ENCODE measurements at regions of chr20 and their contacts with region 1.

Region 1: GRCh38 chr20:10090588-10091166 is 55.9 kb downstream of the ANKEF1 start:
- DNase-seq: peak; percentile 57 to 76
- ATAC-seq: peak; percentile 84 to 91
- H3K4me3 ChIP-seq: no peak overlapping the region
- H3K27ac ChIP-seq: peak overlapping the region; percentile 70 to 85
- H3K4me1 ChIP-seq: peaks cover 43% of the 10 kb centered on the region
- CTCF ChIP-seq: peak; percentile 96
- EP300 ChIP-seq: no peak
- POLR2A ChIP-seq: no peak
- RAD21 ChIP-seq: peak; percentile 95 to 96

Region 2: GRCh38 chr20:9966966-9967365 is 123.7 kb before region 1 on chr20:
- CTCF ChIA-PET with region 1: interaction called, 20 read pairs
- POLR2A ChIA-PET with region 1: no interaction called
- DNase-seq: peak; percentile 36 to 38
- ATAC-seq: peak; percentile 87 to 96
- H3K4me3 ChIP-seq: no peak overlapping the region
- H3K27ac ChIP-seq: no peak overlapping the region
- H3K4me1 ChIP-seq: no peaks in the 10 kb centered on the region
- CTCF ChIP-seq: peak; percentile 64
- EP300 ChIP-seq: no peak
- POLR2A ChIP-seq: no peak
- RAD21 ChIP-seq: peak; percentile 57 to 64; a peak in 4 of 5 replicates

Region 3: GRCh38 chr20:10034717-10035571 is 55.7 kb before region 1 on chr20 and contains the start of gene ANKEF1:
- CTCF ChIA-PET with region 1: interaction called, 86 read pairs
- POLR2A ChIA-PET with region 1: interaction called, 3 read pairs
- DNase-seq: peak; percentile 88 to 91
- ATAC-seq: peak; percentile 99 to 100
- H3K4me3 ChIP-seq: peak within 1 kb of the TSS; percentile 61
- H3K27ac ChIP-seq: peak within 1 kb of the TSS; percentile 85 to 93
- H3K4me1 ChIP-seq: peaks cover 23% of the 10 kb centered on the region
- CTCF ChIP-seq: no peak
- EP300 ChIP-seq: no peak
- POLR2A ChIP-seq: peak; percentile 69
- RAD21 ChIP-seq: peak in 1 of 2 experiments; percentile 38; a peak in 2 of 5 replicates
- polyA plus RNA-seq, gene ANKEF1: 19.7 and 21.2 TPM in 2 replicates

Region 4: DNA sequence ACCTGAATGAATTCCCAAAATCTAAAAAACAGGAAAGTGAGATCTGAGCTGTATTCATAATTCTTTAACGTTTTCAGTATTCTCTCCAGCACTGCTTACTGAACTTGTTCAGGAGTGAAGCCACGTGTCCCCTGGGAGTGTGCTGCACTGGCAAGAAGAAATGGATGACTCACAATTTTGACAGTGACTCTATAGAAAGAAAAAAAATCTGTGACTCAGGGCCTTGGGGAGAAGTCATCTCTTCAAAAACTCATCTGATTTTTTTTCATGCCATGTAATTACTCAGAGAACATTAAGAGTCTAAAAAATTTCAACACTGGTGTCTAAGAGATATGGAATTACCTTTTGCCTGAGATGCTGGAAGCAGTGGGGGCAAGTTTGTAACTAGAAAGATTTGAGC is 16.2 kb before region 1 on chr20:
- CTCF ChIA-PET with region 1: interaction called, 115 read pairs
- POLR2A ChIA-PET with region 1: interaction called, 4 read pairs
- DNase-seq: peak; percentile 75 to 81
- ATAC-seq: peak; percentile 87 to 92
- H3K4me3 ChIP-seq: no peak overlapping the region
- H3K27ac ChIP-seq: peak overlapping the region; percentile 67 to 82
- H3K4me1 ChIP-seq: peaks cover 46% of the 10 kb centered on the region
- CTCF ChIP-seq: no peak
- EP300 ChIP-seq: peak in 1 of 2 experiments; percentile 49; a peak in 1 of 5 replicates
- POLR2A ChIP-seq: no peak
- RAD21 ChIP-seq: 0 out of 5 replicates have a peak, but pooled peaks of 1 of the 2 experiments have one; percentile 1

Region 5: DNA sequence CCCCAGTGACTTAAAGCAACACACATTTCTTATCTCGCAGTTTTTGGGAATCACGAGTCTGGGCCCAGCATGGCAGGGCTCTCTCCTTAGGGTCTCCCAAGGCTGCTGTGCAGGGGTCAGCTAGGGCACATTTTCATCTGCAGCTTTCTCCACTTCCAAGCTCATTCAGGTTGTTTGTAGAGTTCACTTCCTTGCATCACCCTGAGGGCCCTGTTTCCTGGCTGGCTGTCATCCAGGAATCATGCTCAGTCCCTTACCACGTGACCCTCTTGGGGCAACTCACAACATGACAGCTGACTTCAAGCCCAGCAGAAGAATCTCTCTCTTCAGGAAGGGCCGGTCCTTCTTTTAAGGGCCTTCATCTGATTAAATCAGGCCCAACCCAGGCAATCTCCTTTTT is 149.3 kb after region 1 on chr20:
- CTCF ChIA-PET with region 1: interaction called, 18 read pairs
- POLR2A ChIA-PET with region 1: no interaction called
- DNase-seq: peak; percentile 38 to 84
- ATAC-seq: peak; percentile 47
- H3K4me3 ChIP-seq: no peak overlapping the region
- H3K27ac ChIP-seq: peak overlapping the region; percentile 72 to 81
- H3K4me1 ChIP-seq: peaks cover 35% of the 10 kb centered on the region
- CTCF ChIP-seq: no peak
- EP300 ChIP-seq: no peak
- POLR2A ChIP-seq: no peak
- RAD21 ChIP-seq: no peak; a peak in 1 of 5 replicates

Region 6: GRCh38 chr20:10412591-10413408 is 322.1 kb after region 1 on chr20:
- CTCF ChIA-PET with region 1: interaction called, 19 read pairs
- POLR2A ChIA-PET with region 1: interaction called, 4 read pairs
- DNase-seq: peak; percentile 43 to 55
- ATAC-seq: peak; percentile 69 to 82; a peak in 5 of 6 replicates
- H3K4me3 ChIP-seq: no peak overlapping the region
- H3K27ac ChIP-seq: peak overlapping the region; percentile 63 to 82
- H3K4me1 ChIP-seq: peaks cover 83% of the 10 kb centered on the region
- CTCF ChIP-seq: peak; percentile 78
- EP300 ChIP-seq: no peak
- POLR2A ChIP-seq: no peak
- RAD21 ChIP-seq: peak; percentile 69 to 76

Measured in A549 (cell line).